GM13976 (cell line): ENCODE measurements at regions of chr6 and their contacts with region 1.

Region 1: GRCh38 chr6:2989332-2990247 is 10.1 kb upstream of the NQO2 start:
- DNase-seq: peak; percentile 79
- CTCF ChIP-seq: no peak

Region 2: DNA sequence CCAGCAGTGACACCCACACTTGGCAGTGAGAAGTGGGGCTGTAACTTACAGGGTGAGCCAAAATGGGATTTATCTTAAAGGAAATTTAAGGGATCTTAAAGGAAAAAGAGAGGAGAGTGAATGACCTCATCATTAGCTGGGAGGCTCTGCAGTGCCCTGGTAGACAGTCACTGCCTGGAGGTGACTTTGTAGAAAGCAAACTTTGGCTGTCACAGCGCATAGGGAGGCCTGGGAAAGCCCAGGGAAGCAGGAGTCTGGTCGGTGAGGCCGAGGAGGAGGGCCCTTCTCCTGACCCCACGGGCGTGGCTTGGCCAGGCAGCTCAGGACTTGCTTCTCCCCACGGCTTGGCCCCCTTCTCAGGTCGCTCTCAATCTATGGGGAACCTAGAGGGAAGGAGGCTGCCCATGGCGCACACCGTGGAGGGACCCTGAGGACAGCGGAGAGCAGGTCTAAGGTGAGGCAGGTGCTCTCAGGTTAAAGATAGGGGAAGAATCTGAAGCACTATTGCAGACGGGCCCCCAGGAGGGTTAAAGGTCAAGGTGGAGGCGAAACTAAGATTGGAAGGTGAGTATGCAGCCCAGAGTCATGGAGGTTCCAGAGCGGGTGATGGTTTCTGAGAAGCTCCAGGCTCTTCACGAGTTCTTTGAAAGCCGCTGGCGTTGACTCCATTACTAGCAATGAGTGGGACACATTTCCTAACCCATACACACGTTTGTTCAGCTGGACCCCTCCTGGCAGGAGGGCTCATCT is 63.1 kb after region 1 on chr6:
- in situ Hi-C with region 1: loop called (anchors 10 kb)
- DNase-seq: no peak
- CTCF ChIP-seq: no peak